ENCODE measurements at regions of chr14 and their contacts with region 1.

Region 1: DNA sequence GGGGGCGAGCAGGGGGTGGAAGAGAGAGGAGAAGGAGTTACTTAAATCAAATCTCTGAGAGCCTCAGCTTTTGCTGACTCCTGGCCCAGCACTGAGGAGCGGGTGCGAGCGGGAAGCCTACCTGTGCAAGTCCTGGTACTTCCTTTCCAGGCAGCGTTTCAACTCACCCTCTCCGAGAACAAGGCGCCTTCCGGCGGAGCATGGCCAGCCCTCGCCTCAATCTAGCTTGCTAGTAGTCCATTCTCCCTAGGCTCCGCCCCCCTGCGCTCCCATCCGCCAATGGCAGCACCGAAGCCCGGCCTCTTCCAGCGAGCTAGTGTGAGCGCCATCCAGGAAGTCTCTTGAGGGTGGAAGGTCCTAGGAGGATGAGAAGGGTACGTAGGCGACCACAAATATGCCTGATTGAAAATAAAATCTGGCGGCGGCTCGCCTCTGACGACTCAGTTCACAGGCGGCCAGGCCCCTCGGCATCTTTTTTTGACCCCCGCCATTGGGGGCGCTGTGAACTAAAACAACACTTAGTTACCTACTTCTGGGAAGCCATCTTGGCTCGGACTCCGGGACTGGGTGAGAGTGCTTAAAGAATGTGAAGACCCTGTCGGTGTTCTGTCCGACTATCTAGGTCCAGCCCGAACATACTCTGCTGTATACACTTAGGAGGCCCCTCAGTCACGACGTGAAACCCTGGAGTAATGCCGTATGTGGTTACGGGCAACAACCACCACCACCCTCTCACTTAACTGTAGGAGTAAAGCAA is at the start of gene CHD8:
- DNase-seq: peak; percentile 99 to 100
- ATAC-seq: peak; percentile 99
- H3K4me3 ChIP-seq: peak within 1 kb of the TSS; percentile 86
- H3K27ac ChIP-seq: peak within 1 kb of the TSS; percentile 93 to 94
- H3K4me1 ChIP-seq: peaks cover 11% of the 10 kb centered on the region; the same call in 2 of the 3 replicates
- CTCF ChIP-seq: peak; percentile 80
- EP300 ChIP-seq: no peak
- POLR2A ChIP-seq: peak; percentile 89
- RAD21 ChIP-seq: peak; percentile 39 to 49; a peak in 3 of 5 replicates
- polyA plus RNA-seq, gene CHD8: 28.5 and 50.4 TPM in 2 replicates

Region 2: GRCh38 chr14:21437063-21437901 is 18.8 kb before region 1 on chr14:
- CTCF ChIA-PET with region 1: interaction called, 12 read pairs
- POLR2A ChIA-PET with region 1: interaction called, 43 read pairs
- DNase-seq: peak; percentile 91 to 98
- ATAC-seq: peak; percentile 98 to 99
- H3K4me3 ChIP-seq: peak overlapping the region; percentile 70
- H3K27ac ChIP-seq: peak overlapping the region; percentile 81 to 95
- H3K4me1 ChIP-seq: peaks cover 14% of the 10 kb centered on the region; the same call in 2 of the 3 replicates
- CTCF ChIP-seq: no peak
- EP300 ChIP-seq: no peak
- POLR2A ChIP-seq: peak; percentile 17; the same call in 1 of the 2 replicates
- RAD21 ChIP-seq: no peak

Region 3: GRCh38 chr14:21467616-21468015 is 11.5 kb after region 1 on chr14:
- CTCF ChIA-PET with region 1: interaction called, 17 read pairs
- POLR2A ChIA-PET with region 1: interaction called, 4 read pairs
- DNase-seq: no peak
- ATAC-seq: no peak
- H3K4me3 ChIP-seq: no peak overlapping the region
- H3K27ac ChIP-seq: no peak overlapping the region
- H3K4me1 ChIP-seq: no peaks in the 10 kb centered on the region
- CTCF ChIP-seq: no peak
- EP300 ChIP-seq: no peak
- POLR2A ChIP-seq: no peak
- RAD21 ChIP-seq: no peak

Region 4: DNA sequence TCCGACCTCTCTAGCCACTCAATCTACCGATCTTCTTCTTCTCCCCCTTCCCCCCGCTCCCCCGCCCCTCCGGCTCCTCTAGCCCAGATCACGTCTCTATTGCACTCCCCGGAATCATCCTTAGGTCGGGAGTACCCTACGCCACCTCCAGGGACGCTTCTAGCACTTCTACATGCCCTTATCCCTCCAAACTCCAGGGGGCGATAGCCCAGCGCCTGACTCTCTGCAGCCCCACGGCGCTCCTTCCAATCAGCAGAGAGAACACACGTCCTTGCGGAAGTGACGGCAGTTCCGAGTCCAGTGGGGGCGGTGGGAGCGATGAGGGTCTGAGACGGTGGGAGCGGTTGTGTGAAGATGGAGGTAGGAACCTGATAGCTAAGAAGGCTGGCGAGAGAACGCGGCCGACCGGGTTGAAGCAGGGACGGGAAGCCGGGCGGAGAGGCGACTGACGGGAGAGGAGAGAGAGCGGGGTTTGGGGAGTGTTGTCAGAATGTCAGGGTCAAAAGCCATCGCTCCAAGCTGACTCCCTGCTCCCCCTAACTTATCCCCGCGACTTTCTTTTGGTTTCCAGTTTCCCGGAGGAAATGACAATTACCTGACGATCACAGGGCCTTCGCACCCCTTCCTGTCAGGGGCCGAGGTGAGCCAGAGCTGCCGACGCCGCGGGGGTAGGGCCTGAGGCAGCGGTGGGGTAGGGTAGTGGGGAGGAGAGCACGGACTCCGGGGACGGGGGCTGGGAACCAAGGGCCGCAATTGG is 21.0 kb after region 1 on chr14 and contains the starts of genes RAB2B and TOX4:
- CTCF ChIA-PET with region 1: interaction called, 29 read pairs
- POLR2A ChIA-PET with region 1: interaction called, 13 read pairs
- DNase-seq: peak; percentile 91 to 99
- ATAC-seq: peak; percentile 97 to 100
- H3K4me3 ChIP-seq: peak within 1 kb of the TSS; percentile 78
- H3K27ac ChIP-seq: peak within 1 kb of the TSS; percentile 72 to 91
- H3K4me1 ChIP-seq: peaks cover 12% of the 10 kb centered on the region
- CTCF ChIP-seq: peak; percentile 84
- EP300 ChIP-seq: peak in 1 of 2 experiments; percentile 16; a peak in 1 of 5 replicates
- POLR2A ChIP-seq: peak; percentile 65
- RAD21 ChIP-seq: no peak
- polyA plus RNA-seq, gene RAB2B: 37.5 and 41.3 TPM in 2 replicates
- polyA plus RNA-seq, gene TOX4: 76.4 and 80.3 TPM in 2 replicates

Region 5: GRCh38 chr14:21510735-21511657 is 54.9 kb after region 1 on chr14 and contains the start of gene METTL3:
- CTCF ChIA-PET with region 1: interaction called, 5 read pairs
- POLR2A ChIA-PET with region 1: interaction called, 15 read pairs
- DNase-seq: peak; percentile 95 to 99
- ATAC-seq: peak; percentile 99
- H3K4me3 ChIP-seq: peak within 1 kb of the TSS; percentile 73
- H3K27ac ChIP-seq: peak within 1 kb of the TSS; percentile 79 to 91
- H3K4me1 ChIP-seq: peaks cover 6% of the 10 kb centered on the region; the same call in 2 of the 3 replicates
- CTCF ChIP-seq: no peak
- EP300 ChIP-seq: no peak
- POLR2A ChIP-seq: peak; percentile 82
- RAD21 ChIP-seq: no peak
- polyA plus RNA-seq, gene METTL3: 103 and 118 TPM in 2 replicates

Region 6: GRCh38 chr14:21525962-21526671 is 70.0 kb after region 1 on chr14 and contains the start of gene SALL2:
- CTCF ChIA-PET with region 1: no interaction called
- POLR2A ChIA-PET with region 1: no interaction called
- DNase-seq: peak; percentile 11 to 31
- ATAC-seq: peak; percentile 67 to 87; a peak in 5 of 6 replicates
- H3K4me3 ChIP-seq: peak within 1 kb of the TSS; percentile 52
- H3K27ac ChIP-seq: peak within 1 kb of the TSS; percentile 60 to 88
- H3K4me1 ChIP-seq: 0 out of 3 replicates have a peak, but pooled peaks cover 3% of the 10 kb centered on the region
- CTCF ChIP-seq: no peak
- EP300 ChIP-seq: no peak
- POLR2A ChIP-seq: peak; percentile 8; the same call in 1 of the 2 replicates
- RAD21 ChIP-seq: no peak
- polyA plus RNA-seq, gene SALL2: 2.8 and 3.8 TPM in 2 replicates

Region 7: GRCh38 chr14:21557084-21557901 is 101.2 kb after region 1 on chr14:
- CTCF ChIA-PET with region 1: interaction called, 10 read pairs
- POLR2A ChIA-PET with region 1: no interaction called
- DNase-seq: peak; percentile 68 to 92
- ATAC-seq: peak; percentile 96
- H3K4me3 ChIP-seq: peak overlapping the region; percentile 36
- H3K27ac ChIP-seq: peak overlapping the region; percentile 57 to 67
- H3K4me1 ChIP-seq: peaks cover 11% of the 10 kb centered on the region; the same call in 2 of the 3 replicates
- CTCF ChIP-seq: peak; percentile 84
- EP300 ChIP-seq: no peak
- POLR2A ChIP-seq: no peak
- RAD21 ChIP-seq: peak; percentile 87 to 90

Region 8: DNA sequence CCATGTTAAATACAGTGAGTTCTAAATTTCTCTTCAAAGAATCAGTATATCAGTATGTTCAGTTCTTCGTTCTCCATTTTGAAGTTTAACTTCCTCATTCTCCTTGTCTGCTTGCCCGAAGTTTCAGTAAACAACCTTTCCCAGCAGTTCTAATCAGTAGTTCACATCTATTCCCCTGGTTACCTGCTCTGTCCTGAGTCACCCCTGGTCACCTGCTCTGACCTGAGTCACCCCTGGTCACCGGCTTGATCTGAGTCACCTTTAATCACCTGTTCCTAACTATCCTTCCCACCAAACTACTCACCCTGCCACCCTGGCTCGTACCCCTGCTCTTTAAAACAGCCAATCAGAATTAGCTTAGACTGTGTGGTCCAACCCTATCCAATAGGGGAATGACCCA is 133.2 kb after region 1 on chr14:
- CTCF ChIA-PET with region 1: no interaction called
- POLR2A ChIA-PET with region 1: no interaction called
- DNase-seq: no peak
- ATAC-seq: no peak
- H3K4me3 ChIP-seq: no peak overlapping the region
- H3K27ac ChIP-seq: no peak overlapping the region
- H3K4me1 ChIP-seq: no peaks in the 10 kb centered on the region
- CTCF ChIP-seq: no peak
- EP300 ChIP-seq: no peak
- POLR2A ChIP-seq: no peak
- RAD21 ChIP-seq: no peak

Region 9: GRCh38 chr14:21617614-21618013 is 161.5 kb after region 1 on chr14:
- CTCF ChIA-PET with region 1: no interaction called
- POLR2A ChIA-PET with region 1: no interaction called
- DNase-seq: no peak
- ATAC-seq: no peak
- H3K4me3 ChIP-seq: no peak overlapping the region
- H3K27ac ChIP-seq: no peak overlapping the region
- H3K4me1 ChIP-seq: no peaks in the 10 kb centered on the region
- CTCF ChIP-seq: no peak
- EP300 ChIP-seq: no peak
- POLR2A ChIP-seq: no peak
- RAD21 ChIP-seq: no peak

Measured in A549 (cell line).